Activated T-helper 1 cell treated with anti-CD3 and anti-CD28 coated beads, Interleukin-12 subunit alpha, Interleukin-12 subunit beta, Interleukin-2, Interleukin-4 antibody, amounts not matched to agents 30 ng/mL and 10 ng/mL and 1 ng/mL, durations not matched to agents 14 hours and 24 hours and 36 hours (primary cell): ENCODE measurements at regions of chr22 and their contacts with region 1.

Region 1: DNA sequence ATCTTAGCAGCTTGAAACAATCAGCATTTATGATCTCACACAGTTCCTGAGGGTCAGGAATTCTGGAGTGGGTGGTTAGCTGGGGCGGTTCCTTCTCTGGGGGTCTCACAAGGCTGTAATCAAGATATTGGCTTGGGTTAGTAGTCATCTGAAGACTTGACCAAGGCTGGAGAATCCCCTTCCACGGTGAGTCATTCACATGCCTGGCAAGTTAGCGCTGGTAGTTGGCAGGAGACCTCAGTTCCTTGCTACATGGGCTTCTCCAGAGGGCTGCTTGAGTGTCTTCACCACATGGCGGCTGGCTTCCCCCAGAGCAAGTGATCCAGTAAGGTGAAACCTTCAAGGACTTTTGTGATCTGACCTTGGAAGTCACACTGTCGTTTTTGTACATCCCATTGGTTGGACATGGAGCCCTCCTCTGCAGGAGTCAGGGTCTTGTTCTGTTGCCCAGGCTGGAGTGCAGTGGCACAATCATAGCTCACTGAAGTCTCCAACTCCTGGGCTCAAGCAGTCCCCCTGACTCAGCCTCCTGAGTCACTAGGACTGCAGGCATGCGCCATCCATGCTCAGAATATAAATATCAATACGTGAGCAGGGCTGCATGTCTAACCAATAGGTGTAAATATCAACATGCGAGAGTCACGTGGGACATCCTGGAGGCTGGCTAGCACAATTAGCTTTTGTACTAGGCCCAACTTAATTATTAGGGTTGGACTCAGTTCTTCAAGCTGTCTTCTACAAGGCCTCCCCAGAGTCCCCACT is 7.2 kb upstream of the NIPSNAP1 start:
- DNase-seq: no peak
- H3K4me3 Mint-ChIP-seq: no peak overlapping the region
- H3K27ac Mint-ChIP-seq: no peak overlapping the region
- H3K4me1 Mint-ChIP-seq: peaks cover 11% of the 10 kb centered on the region
- H3K27me3 Mint-ChIP-seq: no peaks in the 10 kb centered on the region

Region 2: DNA sequence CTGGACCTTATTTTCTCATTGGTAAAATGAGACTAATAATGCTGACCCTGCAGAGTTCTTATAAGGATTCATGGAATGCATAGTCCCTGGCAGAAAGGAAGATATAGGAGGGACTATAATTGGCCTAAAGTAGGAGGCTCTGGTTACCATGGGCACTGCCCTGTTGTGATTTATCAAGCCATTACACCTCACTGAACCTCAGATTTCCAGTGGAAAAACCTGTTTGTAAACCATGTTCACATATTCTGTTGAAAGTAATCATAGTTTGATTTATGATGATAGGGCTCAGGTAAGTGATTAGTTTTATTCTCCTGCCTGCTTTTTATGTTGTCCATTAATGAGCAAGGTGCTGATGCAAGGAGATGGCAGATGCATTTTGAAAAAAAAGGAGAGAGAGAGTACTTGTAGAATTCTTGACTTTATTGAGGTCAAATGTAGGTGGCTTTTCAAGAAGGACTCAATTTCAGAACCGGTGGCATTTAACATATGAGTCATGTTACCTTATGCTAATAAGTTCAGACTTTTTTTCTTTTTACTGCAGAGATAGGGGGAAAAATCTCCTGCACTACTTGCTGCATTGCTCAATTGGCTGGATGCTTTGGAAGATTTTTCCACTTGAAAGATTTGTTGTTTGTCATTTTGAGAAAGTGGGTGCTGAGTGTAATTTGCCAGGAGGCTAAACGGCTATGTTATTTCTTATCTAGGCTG is 30.0 kb after region 1 on chr22:
- intact Hi-C with region 1: loop called (anchors 2 kb)
- DNase-seq: no peak
- H3K4me3 Mint-ChIP-seq: no peak overlapping the region
- H3K27ac Mint-ChIP-seq: peak overlapping the region; percentile 63
- H3K4me1 Mint-ChIP-seq: peaks cover 30% of the 10 kb centered on the region
- H3K27me3 Mint-ChIP-seq: no peaks in the 10 kb centered on the region

Region 3: DNA sequence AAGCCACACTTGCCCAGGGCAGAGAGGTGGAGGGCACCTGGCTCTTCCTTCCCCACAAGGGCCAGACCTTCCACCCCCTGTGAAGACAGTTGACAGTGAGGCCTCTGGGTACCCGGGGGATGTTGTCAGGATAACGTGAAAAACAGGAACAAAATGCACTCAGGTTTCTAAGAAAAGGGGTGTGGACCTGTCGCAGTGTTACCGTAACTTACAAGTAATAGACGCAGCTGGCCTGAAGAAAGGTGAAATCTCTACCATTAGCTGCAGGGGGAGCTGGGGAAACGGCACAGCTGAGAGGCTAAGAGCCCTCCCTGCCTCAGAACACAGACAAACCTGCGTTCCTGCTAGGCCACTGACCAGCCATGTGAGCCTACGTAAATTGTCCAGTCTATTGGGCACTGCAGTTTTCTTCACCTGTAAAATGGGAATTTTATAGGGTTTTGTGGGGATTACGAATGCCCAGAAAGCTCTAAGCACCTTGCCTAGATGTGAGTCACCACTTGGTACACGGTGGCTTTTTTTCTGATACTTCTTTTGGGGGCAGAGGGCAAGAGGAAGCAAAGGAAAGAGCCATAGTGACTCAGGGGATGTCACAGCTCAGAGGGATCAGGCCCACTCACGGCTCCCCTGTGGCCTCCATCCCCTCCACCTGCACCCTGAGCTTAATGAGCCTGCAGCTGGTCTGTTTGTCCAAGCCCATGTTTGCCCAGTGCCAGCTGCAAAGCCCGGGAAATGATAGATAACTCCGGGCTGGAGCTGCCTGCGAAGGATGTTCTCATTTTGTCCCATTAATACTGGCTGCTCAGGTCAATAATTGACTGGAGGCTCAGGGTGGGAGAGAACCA is 113.3 kb after region 1 on chr22:
- intact Hi-C with region 1: no loop called
- DNase-seq: peak; percentile 5
- H3K4me3 Mint-ChIP-seq: no peak overlapping the region
- H3K27ac Mint-ChIP-seq: no peak overlapping the region
- H3K4me1 Mint-ChIP-seq: peaks cover 14% of the 10 kb centered on the region
- H3K27me3 Mint-ChIP-seq: no peaks in the 10 kb centered on the region